Uterus (tissue), 4 donors: ENCODE measurements at regions of chr6 and their contacts with region 1.

Region 1: DNA sequence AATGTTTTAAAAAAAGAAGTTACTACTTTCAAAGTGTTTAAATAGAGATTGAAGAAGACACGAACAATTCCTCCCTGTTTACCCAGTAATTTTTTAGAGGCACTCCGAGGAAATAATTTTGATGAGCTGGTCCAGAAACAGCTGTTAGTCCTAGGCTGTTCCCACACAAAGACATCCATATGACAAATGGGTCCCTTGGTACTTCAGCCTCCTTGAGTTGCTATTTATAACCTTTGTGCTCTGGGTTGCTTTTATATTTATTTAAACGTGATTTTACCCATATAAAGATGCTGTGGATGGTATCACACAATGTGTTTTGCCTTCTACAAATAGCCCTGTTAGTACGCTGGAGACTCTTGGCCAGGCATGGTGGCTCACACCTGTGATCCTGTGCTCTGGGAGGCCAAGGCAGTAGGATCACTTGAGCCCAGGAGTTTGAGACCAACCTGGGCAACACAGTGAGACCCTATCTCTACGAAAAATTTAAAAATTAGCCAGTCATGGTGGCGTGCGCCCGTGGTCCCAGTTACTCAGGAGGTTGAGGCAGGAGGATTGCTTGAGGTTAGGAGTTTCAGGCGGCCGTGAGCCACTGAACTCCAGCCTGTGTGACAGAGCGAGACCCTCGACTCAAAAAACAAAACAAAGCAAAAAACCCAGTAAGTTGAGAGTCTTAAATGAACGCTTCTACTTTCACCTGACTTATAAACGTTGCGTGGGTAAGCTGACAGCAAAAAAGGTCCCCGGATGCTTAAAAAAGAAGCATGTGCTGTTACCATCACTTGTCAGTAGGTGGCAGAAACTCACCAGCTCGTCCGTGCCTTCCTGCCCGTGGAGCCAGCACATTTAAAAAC is 56.9 kb upstream of the ARMH2 start:
- DNase-seq: peak; percentile 44 to 72
- H3K4me3 ChIP-seq: no peak overlapping the region
- H3K27ac ChIP-seq: peak overlapping the region; percentile 51 to 84
- H3K4me1 ChIP-seq: no peaks in the 10 kb centered on the region
- H3K27me3 ChIP-seq: no peaks in the 10 kb centered on the region
- CTCF ChIP-seq: peak; percentile 84 to 92 (median 89)
- POLR2A ChIP-seq: no peak

Region 2: GRCh38 chr6:24991810-24992467 is 136.3 kb after region 1 on chr6:
- intact Hi-C with region 1: loop called (anchors 5 kb)
- DNase-seq: peak; percentile 37 to 53
- H3K4me3 ChIP-seq: no peak overlapping the region
- H3K27ac ChIP-seq: peak overlapping the region in 1 of 2 donors; percentile 19
- H3K4me1 ChIP-seq: peaks cover 0 to 4% of the 10 kb centered on the region in 2 donors
- H3K27me3 ChIP-seq: no peaks in the 10 kb centered on the region
- CTCF ChIP-seq: peak; percentile 54 to 70 (median 62)
- POLR2A ChIP-seq: no peak

Region 3: GRCh38 chr6:25070547-25071366 is 215.1 kb after region 1 on chr6:
- intact Hi-C with region 1: loop called (anchors 5 kb)
- DNase-seq: peak; percentile 81 to 89
- H3K4me3 ChIP-seq: no peak overlapping the region
- H3K27ac ChIP-seq: peak overlapping the region; percentile 57 to 73
- H3K4me1 ChIP-seq: no peaks in the 10 kb centered on the region
- H3K27me3 ChIP-seq: no peaks in the 10 kb centered on the region
- CTCF ChIP-seq: peak; percentile 88 to 93 (median 91)
- POLR2A ChIP-seq: no peak